ENCODE measurements at regions of chr6 and their contacts with region 1.

Region 1: GRCh38 chr6:71383901-71384489 is 95.4 kb downstream of the OGFRL1 start:
- DNase-seq: peak in 4 of 7 donors; percentile 21 to 38 (median 24)
- H3K4me3 ChIP-seq: no peak overlapping the region
- H3K27ac ChIP-seq: no peak overlapping the region
- H3K4me1 ChIP-seq: peaks cover 4 to 6% of the 10 kb centered on the region in 2 donors
- H3K27me3 ChIP-seq: no peaks in the 10 kb centered on the region
- CTCF ChIP-seq: peak; percentile 56 to 78 (median 76)
- POLR2A ChIP-seq: no peak

Region 2: DNA sequence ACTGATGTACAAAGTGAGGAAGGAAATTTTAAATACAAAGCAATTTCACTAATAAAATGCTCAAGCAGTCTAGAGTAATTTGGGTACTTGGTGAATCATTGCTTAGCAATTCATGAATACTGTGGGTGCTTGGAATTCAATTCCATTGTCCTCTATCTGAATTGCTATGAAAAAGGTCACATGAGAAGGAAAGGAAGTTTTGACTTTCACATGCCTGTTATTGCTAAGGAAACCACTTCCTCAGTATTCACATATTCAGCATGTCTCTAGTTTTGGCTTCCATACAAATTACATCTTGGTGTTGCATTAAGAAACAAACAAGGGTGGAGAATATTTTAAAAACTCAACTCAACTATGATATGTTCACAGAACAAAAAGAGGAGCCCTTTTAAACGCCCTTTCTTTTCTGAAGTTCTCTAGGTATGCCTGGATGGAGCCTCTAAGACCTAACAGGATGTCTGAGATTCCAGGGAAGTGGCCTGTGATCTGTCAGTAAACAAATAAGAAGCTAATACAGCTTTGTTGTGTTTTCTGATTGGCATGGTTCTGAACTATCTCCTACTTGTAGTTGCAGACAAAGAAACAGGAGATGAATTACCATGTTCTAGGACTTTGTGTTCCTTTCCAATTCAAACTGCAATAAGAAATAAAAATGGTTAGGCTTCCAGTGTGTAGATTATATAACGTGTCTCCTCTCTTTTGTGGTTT is 95.0 kb after region 1 on chr6:
- intact Hi-C with region 1: loop called in 1 of 2 experiments (anchors 10 kb)
- DNase-seq: no peak
- H3K4me3 ChIP-seq: no peak overlapping the region
- H3K27ac ChIP-seq: peak overlapping the region in 3 of 5 donors; percentile 36 to 67 (median 63)
- H3K4me1 ChIP-seq: peaks cover 6 to 29% of the 10 kb centered on the region in 2 donors
- H3K27me3 ChIP-seq: no peaks in the 10 kb centered on the region
- CTCF ChIP-seq: no peak
- POLR2A ChIP-seq: no peak

Region 3: DNA sequence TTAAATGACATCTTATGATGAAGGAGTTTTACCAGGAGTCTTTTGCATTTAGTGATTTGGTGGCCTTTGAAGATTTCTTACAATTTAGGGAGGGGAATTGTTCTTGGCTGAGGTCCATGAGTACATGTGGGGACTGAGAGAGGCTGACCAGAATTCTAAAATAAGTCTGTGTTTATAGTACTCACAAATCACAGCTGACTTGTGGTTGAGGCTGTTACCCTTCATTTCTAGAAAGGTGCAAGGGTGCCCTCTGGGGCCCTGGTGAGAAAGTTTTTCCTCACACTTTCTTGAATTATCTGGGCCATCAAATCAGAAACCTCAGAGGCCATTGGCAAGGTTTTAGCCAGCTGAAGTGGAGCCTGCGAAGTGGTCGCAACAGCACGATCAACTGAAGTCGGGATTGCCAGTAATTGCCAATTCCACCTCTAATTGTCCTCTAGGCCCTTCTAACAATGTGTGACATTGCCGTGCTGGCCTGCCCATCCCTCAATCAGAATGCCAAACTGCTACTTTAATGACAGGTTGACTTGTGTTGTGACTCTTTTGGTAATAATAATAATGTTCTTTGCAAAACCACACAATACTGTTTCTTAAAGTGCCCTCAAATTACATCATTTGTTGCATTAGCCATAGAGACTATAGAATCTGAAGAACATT is 126.2 kb after region 1 on chr6:
- intact Hi-C with region 1: loop called in 1 of 2 experiments (anchors 10 kb)
- DNase-seq: peak; percentile 30 to 62 (median 34)
- H3K4me3 ChIP-seq: no peak overlapping the region
- H3K27ac ChIP-seq: no peak overlapping the region
- H3K4me1 ChIP-seq: no peaks in the 10 kb centered on the region
- H3K27me3 ChIP-seq: no peaks in the 10 kb centered on the region
- CTCF ChIP-seq: peak in 5 of 6 experiments; percentile 38 to 64 (median 49)
- POLR2A ChIP-seq: no peak